ENCODE measurements at regions of chr11 and their contacts with region 1.

Region 1: GRCh38 chr11:6705905-6706535 is 22.9 kb upstream of the MRPL17 start:
- DNase-seq: no peak
- H3K4me3 ChIP-seq: no peak overlapping the region
- H3K27ac ChIP-seq: no peak overlapping the region
- H3K4me1 ChIP-seq: peaks cover 0 to 8% (median 6%) of the 10 kb centered on the region in 4 donors
- H3K27me3 ChIP-seq: no peaks in the 10 kb centered on the region
- CTCF ChIP-seq: peak; percentile 90 to 97 (median 93)
- EP300 ChIP-seq: no peak
- POLR2A ChIP-seq: no peak

Region 2: DNA sequence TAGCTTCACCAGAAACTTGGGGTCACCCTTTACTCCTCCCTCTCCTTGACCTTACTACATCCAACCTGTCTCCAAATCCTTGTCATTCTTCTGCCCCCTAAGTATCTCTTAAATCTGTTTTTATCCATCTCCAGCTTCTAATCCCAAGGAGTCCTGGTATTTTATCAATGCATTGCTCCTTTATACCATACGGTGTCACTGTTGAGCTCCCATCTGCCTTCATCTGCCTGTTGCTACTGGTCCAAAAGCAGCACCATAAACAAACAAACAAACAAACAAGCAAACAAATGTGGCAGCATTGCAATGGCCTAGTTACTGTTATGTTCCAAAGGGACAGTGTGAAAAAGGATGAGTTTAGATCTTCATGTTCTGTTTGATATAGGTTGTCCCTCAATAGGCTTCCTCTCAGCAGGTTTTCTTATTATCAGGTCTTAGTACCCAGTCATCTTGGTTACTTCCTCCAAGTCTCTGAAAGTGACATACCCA is 174.7 kb before region 1 on chr11:
- intact Hi-C with region 1: loop called (anchors 5 kb)
- DNase-seq: no peak
- H3K4me3 ChIP-seq: no peak overlapping the region
- H3K27ac ChIP-seq: no peak overlapping the region
- H3K4me1 ChIP-seq: no peaks in the 10 kb centered on the region
- H3K27me3 ChIP-seq: no peaks in the 10 kb centered on the region
- CTCF ChIP-seq: peak; percentile 60 to 82 (median 80)
- EP300 ChIP-seq: no peak
- POLR2A ChIP-seq: no peak

Region 3: GRCh38 chr11:6667733-6668374 is 38.2 kb before region 1 on chr11:
- intact Hi-C with region 1: no loop called
- DNase-seq: no peak
- H3K4me3 ChIP-seq: no peak overlapping the region
- H3K27ac ChIP-seq: no peak overlapping the region
- H3K4me1 ChIP-seq: peaks cover 0 to 10% (median 0%) of the 10 kb centered on the region in 4 donors
- H3K27me3 ChIP-seq: no peaks in the 10 kb centered on the region
- CTCF ChIP-seq: peak; percentile 43 to 62 (median 44)
- EP300 ChIP-seq: no peak
- POLR2A ChIP-seq: no peak

Region 4: DNA sequence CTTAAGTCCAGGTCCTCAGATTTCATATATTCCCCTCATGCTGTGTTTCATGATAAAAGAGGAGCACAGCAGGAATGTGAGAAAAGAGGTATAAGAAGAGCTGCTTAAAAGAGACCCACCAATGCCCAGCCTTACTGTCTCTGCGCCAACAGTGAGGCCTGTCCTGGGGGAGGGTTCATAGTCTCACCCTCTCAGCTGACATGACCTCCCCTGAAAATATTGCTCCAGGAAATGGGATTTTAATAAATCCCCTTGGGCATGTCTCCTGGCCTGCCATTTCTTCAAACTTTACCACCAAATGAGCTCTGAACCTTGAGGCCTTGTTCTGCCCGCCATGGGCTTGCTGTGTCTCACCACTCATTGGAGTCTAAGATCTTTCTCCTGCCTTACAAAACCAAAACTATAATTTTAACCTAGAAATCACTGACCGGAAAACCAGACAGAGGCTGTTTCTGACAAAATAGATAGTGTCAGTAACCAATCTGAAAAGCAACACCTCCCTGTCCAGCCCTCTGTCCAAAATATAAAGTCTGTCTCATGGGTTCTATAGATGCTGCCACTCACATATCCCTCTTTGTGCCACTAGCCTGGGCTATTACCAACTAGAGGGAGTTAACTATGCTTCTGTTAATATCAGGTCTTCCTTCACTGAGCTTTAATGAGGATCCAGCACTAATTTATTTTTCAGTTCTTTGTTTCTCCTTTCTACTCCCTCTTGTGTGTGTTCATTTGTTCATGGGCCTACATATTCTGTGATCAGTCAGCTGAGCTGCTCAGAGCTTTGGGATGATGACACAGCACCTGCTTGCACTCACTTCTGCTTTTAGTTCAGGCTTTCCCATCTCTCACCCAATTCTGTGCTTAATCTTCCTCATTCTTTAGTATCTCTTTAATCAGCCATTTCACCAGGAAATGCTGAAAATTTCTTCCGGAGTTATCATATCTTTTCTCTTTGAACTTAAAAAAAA is 66.2 kb after region 1 on chr11 and contains the start of gene OR2AG2:
- intact Hi-C with region 1: no loop called
- DNase-seq: no peak
- H3K4me3 ChIP-seq: no peak within 1 kb of the TSS
- H3K27ac ChIP-seq: no peak within 1 kb of the TSS
- H3K4me1 ChIP-seq: no peaks in the 10 kb centered on the region
- H3K27me3 ChIP-seq: no peaks in the 10 kb centered on the region
- CTCF ChIP-seq: no peak
- EP300 ChIP-seq: no peak
- POLR2A ChIP-seq: no peak
- total RNA-seq, gene OR2AG2: not detected